ENCODE measurements at regions of chr10 and their contacts with region 1.

Region 1: GRCh38 chr10:63976538-63976937 is 455.3 kb downstream of the REEP3 start:
- DNase-seq: peak; percentile 65
- H3K4me3 Mint-ChIP-seq: no peak overlapping the region
- H3K27ac Mint-ChIP-seq: no peak overlapping the region
- H3K4me1 Mint-ChIP-seq: no peaks in the 10 kb centered on the region
- H3K27me3 Mint-ChIP-seq: no peaks in the 10 kb centered on the region

Region 2: GRCh38 chr10:63866075-63866746 is 110.3 kb before region 1 on chr10:
- CTCF ChIA-PET with region 1: interaction called, 38 read pairs
- intact Hi-C with region 1: loop called (anchors 1 kb)
- DNase-seq: peak; percentile 65
- H3K4me3 Mint-ChIP-seq: no peak overlapping the region
- H3K27ac Mint-ChIP-seq: no peak overlapping the region
- H3K4me1 Mint-ChIP-seq: peaks cover 10% of the 10 kb centered on the region
- H3K27me3 Mint-ChIP-seq: peaks cover 29% of the 10 kb centered on the region

Region 3: GRCh38 chr10:63935705-63936104 is 40.8 kb before region 1 on chr10:
- CTCF ChIA-PET with region 1: interaction called, 3 read pairs
- intact Hi-C with region 1: loop called (anchors 1 kb)
- DNase-seq: no peak
- H3K4me3 Mint-ChIP-seq: no peak overlapping the region
- H3K27ac Mint-ChIP-seq: no peak overlapping the region
- H3K4me1 Mint-ChIP-seq: no peaks in the 10 kb centered on the region
- H3K27me3 Mint-ChIP-seq: no peaks in the 10 kb centered on the region

Region 4: DNA sequence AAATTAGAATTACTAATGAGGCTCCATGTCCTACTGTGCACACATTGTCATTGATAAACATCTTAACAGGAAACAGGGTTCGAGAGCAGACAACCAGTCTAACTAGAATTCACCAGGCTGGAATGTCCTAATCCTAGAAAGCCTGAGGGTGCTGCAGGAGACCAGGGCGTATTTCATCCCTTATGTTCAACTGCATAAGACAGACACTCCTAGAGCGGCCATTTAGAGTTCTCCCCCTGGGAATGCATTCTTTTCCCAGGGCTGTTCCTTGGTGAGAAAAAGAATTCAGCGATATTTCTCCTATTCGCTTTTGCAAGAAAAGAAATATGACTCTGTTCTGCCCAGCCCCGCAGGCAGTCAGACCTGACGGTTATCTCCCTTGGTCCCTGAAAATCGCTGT is 30.6 kb after region 1 on chr10:
- CTCF ChIA-PET with region 1: interaction called, 13 read pairs
- intact Hi-C with region 1: no loop called
- DNase-seq: no peak
- H3K4me3 Mint-ChIP-seq: no peak overlapping the region
- H3K27ac Mint-ChIP-seq: no peak overlapping the region
- H3K4me1 Mint-ChIP-seq: no peaks in the 10 kb centered on the region
- H3K27me3 Mint-ChIP-seq: no peaks in the 10 kb centered on the region